OCI-LY7 (cell line): ENCODE measurements at regions of chr2 and their contacts with region 1.

Region 1: GRCh38 chr2:74587664-74588277 is 33.3 kb downstream of the DOK1 start:
- DNase-seq: peak; percentile 73
- H3K4me3 ChIP-seq: no peak overlapping the region
- H3K27ac ChIP-seq: no peak overlapping the region
- H3K4me1 ChIP-seq: peaks cover 6% of the 10 kb centered on the region
- CTCF ChIP-seq: peak; percentile 92

Region 2: GRCh38 chr2:74482801-74483674 is 104.7 kb before region 1 on chr2 and contains the starts of genes CCDC142 and TTC31:
- CTCF ChIA-PET with region 1: no interaction called
- POLR2A ChIA-PET with region 1: interaction called, 9 read pairs
- intact Hi-C with region 1: loop called (anchors 1 kb)
- DNase-seq: peak; percentile 95
- H3K4me3 ChIP-seq: peak within 1 kb of the TSS; percentile 78
- H3K27ac ChIP-seq: peak within 1 kb of the TSS; percentile 80
- H3K4me1 ChIP-seq: peaks cover 18% of the 10 kb centered on the region
- CTCF ChIP-seq: peak; percentile 95
- total RNA-seq, gene CCDC142: 52.3 and 53.0 TPM in 2 replicates
- total RNA-seq, gene TTC31: 34.6 and 49.5 TPM in 2 replicates

Region 3: DNA sequence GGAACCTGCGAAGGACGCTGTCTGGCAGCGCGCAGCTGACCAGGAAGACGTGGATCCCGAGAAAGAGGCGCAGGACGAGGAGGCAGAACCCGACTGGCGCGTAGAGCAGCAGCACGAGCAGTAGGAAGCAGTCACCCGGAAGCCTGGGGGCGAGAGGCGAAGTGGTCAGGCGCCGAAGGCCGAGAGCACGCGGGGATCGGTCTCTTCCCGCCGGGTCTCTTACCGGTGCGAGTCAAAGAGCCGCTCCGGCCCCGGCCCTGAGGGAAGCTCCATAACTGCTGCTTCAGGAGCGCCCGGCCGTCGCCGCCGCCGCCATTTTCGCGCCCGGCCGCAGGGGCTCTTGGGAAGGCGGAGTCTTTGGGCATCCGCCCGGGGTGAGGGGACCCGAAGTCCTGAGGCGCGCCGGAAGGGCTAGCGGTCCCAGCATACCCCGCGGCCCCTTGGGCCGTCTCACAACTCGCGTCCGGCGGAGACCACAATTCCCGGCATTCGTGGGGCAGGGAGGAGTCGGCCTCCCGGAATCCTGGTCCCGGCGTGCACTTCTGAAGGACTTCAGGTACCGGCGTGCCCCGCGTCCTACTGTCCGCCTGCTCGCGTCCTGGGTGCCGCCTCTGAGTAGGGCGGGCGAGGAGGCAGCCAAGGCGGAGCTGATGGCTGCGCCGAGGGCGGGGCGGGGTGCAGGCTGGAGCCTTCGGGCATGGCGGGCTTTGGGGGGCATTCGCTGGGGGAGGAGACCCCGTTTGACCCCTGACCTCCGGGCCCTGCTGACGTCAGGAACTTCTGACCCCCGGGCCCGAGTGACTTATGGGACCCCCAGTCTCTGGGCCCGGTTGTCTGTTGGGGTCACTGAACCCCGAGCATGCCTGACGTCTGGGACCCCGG is 58.2 kb before region 1 on chr2 and contains the starts of genes AUP1 and HTRA2:
- CTCF ChIA-PET with region 1: interaction called, 6 read pairs
- POLR2A ChIA-PET with region 1: interaction called, 5 read pairs
- intact Hi-C with region 1: loop called (anchors 1 kb)
- DNase-seq: peak; percentile 99
- H3K4me3 ChIP-seq: peak within 1 kb of the TSS; percentile 98
- H3K27ac ChIP-seq: peak within 1 kb of the TSS; percentile 67
- H3K4me1 ChIP-seq: peaks cover 33% of the 10 kb centered on the region
- CTCF ChIP-seq: no peak
- total RNA-seq, gene AUP1: 163 and 188 TPM in 2 replicates
- total RNA-seq, gene HTRA2: 54.8 and 60.4 TPM in 2 replicates

Region 4: GRCh38 chr2:74576863-74577229 is 10.9 kb before region 1 on chr2:
- CTCF ChIA-PET with region 1: interaction called, 4 read pairs
- POLR2A ChIA-PET with region 1: interaction called, 15 read pairs
- intact Hi-C with region 1: no loop called
- DNase-seq: no peak
- H3K4me3 ChIP-seq: no peak overlapping the region
- H3K27ac ChIP-seq: no peak overlapping the region
- H3K4me1 ChIP-seq: peaks cover 18% of the 10 kb centered on the region
- CTCF ChIP-seq: no peak

Region 5: GRCh38 chr2:74828543-74828942 is 240.8 kb after region 1 on chr2:
- CTCF ChIA-PET with region 1: no interaction called
- POLR2A ChIA-PET with region 1: no interaction called
- intact Hi-C with region 1: no loop called
- DNase-seq: no peak
- H3K4me3 ChIP-seq: no peak overlapping the region
- H3K27ac ChIP-seq: no peak overlapping the region
- H3K4me1 ChIP-seq: peaks cover 10% of the 10 kb centered on the region
- CTCF ChIP-seq: no peak